Activated B cell treated with CpG ODN at 0.5 μM for 24 hours (primary cell): ENCODE measurements at regions of chr13 and their contacts with region 1.

Region 1: DNA sequence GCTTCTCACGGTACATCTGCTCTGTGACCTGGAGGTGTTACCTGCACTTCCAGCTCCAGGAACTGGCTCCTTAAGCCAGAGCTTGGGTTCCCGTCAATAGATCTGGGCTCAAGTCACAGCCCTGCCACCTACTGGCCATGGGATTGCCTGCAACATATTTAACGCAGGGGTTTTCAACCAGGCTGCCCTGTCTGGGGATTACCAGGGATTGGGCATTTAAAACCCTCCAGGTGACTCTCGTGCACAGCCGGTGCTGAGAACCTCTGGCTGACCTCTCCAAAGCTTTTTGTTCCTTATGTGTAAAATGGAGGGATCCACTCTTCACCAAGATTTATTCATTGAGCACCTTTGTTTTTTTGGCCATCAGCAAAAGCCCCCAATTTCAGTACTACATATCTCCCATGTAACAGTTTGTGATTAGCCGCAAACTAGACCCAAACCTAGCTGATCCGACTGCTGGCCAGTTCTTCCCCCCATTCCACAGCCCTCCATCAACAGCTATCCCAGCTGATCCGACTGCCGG is 76.6 kb upstream of the STK24 start:
- DNase-seq: peak; percentile 55
- ATAC-seq: peak; percentile 96
- H3K4me3 Mint-ChIP-seq: no peak overlapping the region
- H3K27ac Mint-ChIP-seq: no peak overlapping the region
- H3K4me1 Mint-ChIP-seq: peaks cover 5% of the 10 kb centered on the region
- H3K27me3 Mint-ChIP-seq: peaks cover 2% of the 10 kb centered on the region
- CTCF ChIP-seq: peak; percentile 62

Region 2: DNA sequence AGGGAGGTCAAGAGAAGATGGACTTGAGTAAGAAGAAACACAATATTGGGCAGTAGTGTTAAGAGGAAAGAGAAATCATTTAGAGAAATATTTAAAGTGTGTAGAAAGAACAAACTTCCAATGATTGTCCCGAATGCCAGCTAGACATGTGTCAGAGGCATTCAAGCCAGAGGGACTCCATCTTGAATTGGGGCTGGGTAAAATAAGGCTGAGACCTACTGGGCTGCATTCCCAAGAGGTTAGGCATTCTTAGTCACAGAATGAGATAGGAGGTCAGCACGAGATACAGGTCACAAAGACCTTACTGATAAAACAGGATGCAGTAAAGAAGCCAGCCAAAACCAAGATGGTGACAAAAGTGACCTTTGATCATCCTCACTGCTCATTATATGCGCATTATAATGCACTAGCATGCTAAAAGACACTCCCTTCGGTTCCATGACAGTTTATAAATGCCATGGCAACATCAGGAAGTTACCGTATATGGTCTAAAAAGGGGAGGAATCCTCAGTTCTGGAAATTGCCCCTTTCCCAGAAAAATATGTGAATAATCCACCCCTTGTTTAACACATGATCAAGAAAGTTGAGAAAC is 827.0 kb before region 1 on chr13:
- CTCF ChIA-PET with region 1: no interaction called
- POLR2A ChIA-PET with region 1: no interaction called
- intact Hi-C with region 1: no loop called
- DNase-seq: no peak
- ATAC-seq: no peak
- H3K4me3 Mint-ChIP-seq: no peak overlapping the region
- H3K27ac Mint-ChIP-seq: no peak overlapping the region
- H3K4me1 Mint-ChIP-seq: no peaks in the 10 kb centered on the region
- H3K27me3 Mint-ChIP-seq: peaks cover 1% of the 10 kb centered on the region
- CTCF ChIP-seq: no peak

Region 3: GRCh38 chr13:98466634-98467236 is 186.8 kb before region 1 on chr13:
- CTCF ChIA-PET with region 1: interaction called, 37 read pairs
- POLR2A ChIA-PET with region 1: no interaction called
- intact Hi-C with region 1: loop called (anchors 1 kb)
- DNase-seq: no peak
- ATAC-seq: no peak
- H3K4me3 Mint-ChIP-seq: no peak overlapping the region
- H3K27ac Mint-ChIP-seq: peak overlapping the region; percentile 35
- H3K4me1 Mint-ChIP-seq: no peaks in the 10 kb centered on the region
- H3K27me3 Mint-ChIP-seq: no peaks in the 10 kb centered on the region
- CTCF ChIP-seq: peak; percentile 33

Region 4: DNA sequence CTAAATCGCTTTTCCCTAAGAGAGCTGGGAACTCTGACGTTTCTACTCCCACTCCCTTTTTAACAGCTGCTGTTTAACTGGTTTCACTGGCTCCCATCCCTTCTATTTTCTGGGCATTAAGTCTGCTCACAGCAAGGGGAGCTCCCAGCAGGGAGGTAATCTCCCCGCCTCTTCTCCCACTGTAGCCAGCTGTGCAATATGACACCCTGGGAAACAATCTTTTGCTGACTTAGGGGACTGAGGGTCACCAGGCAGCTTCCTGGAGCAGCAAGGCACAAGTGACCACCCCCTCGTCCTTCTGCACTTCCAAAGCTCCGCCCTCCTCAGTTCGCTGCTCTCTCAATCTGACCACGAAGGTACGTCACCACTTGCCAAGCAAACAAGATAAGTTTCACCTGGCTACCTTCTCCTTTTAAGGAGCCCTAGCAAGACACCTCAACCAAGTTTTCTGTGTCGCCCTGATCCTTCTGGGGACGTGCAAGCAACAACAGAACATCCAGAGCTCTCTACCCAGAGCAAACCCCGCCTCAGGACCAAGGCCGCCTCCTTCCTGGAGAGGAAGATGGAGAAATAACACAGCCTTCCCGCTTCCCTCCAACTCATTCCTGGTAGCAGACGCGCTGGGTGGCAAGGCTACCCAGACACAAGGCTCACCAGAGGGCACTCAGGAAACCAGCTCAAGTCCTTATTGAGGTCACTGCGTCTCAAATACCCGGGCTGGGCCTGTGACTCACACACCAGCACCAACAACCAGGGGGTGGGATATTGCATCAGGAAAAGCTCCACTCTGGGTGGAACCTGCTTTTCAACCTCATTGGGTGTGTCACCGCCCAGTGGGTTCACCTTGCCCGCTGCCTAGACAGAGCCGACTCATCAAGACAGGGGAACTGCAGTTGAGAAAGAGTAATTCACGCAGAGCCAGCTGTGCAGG is 169.0 kb before region 1 on chr13:
- CTCF ChIA-PET with region 1: interaction called, 17 read pairs
- POLR2A ChIA-PET with region 1: no interaction called
- intact Hi-C with region 1: no loop called
- DNase-seq: no peak
- ATAC-seq: no peak
- H3K4me3 Mint-ChIP-seq: no peak overlapping the region
- H3K27ac Mint-ChIP-seq: peak overlapping the region; percentile 22
- H3K4me1 Mint-ChIP-seq: peaks cover 90% of the 10 kb centered on the region
- H3K27me3 Mint-ChIP-seq: no peaks in the 10 kb centered on the region
- CTCF ChIP-seq: no peak

Region 5: GRCh38 chr13:98542568-98543377 is 110.8 kb before region 1 on chr13:
- CTCF ChIA-PET with region 1: interaction called, 8 read pairs
- POLR2A ChIA-PET with region 1: no interaction called
- intact Hi-C with region 1: loop called (anchors 5 kb)
- DNase-seq: no peak
- ATAC-seq: peak; percentile 73
- H3K4me3 Mint-ChIP-seq: peak overlapping the region; percentile 77
- H3K27ac Mint-ChIP-seq: peak overlapping the region; percentile 73
- H3K4me1 Mint-ChIP-seq: peaks cover 85% of the 10 kb centered on the region
- H3K27me3 Mint-ChIP-seq: no peaks in the 10 kb centered on the region
- CTCF ChIP-seq: no peak

Region 6: DNA sequence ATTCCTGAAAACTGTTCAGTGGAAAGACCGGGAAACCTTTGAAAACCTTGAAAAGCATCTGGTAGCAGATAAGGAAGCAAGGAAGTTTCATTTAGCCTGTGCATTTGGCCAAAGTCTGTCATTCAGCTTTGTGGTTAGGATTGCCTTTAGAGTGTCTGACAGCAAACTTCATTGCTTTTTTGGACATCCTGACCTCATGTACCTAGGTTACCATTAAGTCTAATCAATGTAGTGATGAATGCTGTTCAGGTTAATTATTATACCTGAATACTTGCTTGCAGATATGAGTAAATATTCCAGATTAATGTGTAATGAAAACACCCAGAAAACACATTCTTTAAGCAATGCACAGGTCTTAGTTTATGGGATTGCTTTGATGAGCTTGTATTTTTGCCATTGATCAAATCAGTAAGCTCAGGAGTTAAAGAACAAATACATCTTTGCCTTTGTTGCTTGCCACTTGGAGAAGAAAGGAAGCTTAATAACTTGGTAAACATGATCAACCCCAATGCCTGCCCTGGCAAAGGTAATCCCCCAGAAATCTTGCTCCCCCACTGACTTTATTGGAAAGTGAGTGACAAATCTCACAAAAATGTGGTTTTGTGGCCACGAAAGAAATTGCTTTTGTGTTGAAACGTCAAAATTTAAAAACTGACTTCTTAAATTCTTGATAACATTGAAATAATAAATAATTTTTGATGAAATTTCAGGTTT is 11.6 kb after region 1 on chr13:
- CTCF ChIA-PET with region 1: interaction called, 12 read pairs
- POLR2A ChIA-PET with region 1: no interaction called
- intact Hi-C with region 1: no loop called
- DNase-seq: no peak
- ATAC-seq: no peak
- H3K4me3 Mint-ChIP-seq: no peak overlapping the region
- H3K27ac Mint-ChIP-seq: no peak overlapping the region
- H3K4me1 Mint-ChIP-seq: no peaks in the 10 kb centered on the region
- H3K27me3 Mint-ChIP-seq: peaks cover 3% of the 10 kb centered on the region
- CTCF ChIP-seq: no peak

Region 7: DNA sequence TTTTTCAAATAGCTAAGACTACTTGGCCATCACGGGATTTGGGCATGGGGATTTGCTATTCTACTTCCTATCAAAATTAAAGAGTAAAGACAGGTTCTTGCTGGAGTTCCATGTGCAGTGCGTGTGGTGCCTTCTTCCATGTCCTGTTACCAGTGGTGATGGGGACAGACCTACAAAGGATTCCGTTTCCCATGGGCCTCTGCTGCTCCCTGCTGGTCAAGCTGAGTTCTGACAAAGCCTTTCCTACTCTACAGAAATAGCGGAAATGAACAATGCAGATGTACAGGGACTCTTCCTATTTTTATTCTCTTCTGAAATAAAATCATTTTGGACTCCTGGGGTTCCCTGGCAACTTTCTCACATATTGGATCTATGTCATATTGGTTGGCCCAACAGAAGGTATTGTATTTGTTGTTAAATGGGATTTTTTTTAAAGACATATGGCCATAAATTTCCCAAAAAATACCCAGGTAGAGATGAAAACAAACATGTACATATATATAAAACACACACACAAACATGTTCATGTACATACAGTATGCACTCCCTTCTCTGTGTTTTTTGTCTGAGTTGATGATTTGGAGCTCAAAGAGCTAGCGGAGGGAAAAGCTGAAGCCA is 189.4 kb after region 1 on chr13:
- CTCF ChIA-PET with region 1: no interaction called
- POLR2A ChIA-PET with region 1: no interaction called
- intact Hi-C with region 1: loop called (anchors 2 kb)
- DNase-seq: peak; percentile 34
- ATAC-seq: peak; percentile 86
- H3K4me3 Mint-ChIP-seq: no peak overlapping the region
- H3K27ac Mint-ChIP-seq: no peak overlapping the region
- H3K4me1 Mint-ChIP-seq: no peaks in the 10 kb centered on the region
- H3K27me3 Mint-ChIP-seq: no peaks in the 10 kb centered on the region
- CTCF ChIP-seq: peak; percentile 37

Region 8: GRCh38 chr13:99859178-99860177 is 1206.0 kb after region 1 on chr13:
- CTCF ChIA-PET with region 1: no interaction called
- POLR2A ChIA-PET with region 1: no interaction called
- intact Hi-C with region 1: no loop called
- DNase-seq: no peak
- ATAC-seq: no peak
- H3K4me3 Mint-ChIP-seq: no peak overlapping the region
- H3K27ac Mint-ChIP-seq: no peak overlapping the region
- H3K4me1 Mint-ChIP-seq: no peaks in the 10 kb centered on the region
- H3K27me3 Mint-ChIP-seq: no peaks in the 10 kb centered on the region
- CTCF ChIP-seq: no peak